Ovary (tissue), 10 donors: ENCODE measurements at regions of chr11 and their contacts with region 1.

Region 1: DNA sequence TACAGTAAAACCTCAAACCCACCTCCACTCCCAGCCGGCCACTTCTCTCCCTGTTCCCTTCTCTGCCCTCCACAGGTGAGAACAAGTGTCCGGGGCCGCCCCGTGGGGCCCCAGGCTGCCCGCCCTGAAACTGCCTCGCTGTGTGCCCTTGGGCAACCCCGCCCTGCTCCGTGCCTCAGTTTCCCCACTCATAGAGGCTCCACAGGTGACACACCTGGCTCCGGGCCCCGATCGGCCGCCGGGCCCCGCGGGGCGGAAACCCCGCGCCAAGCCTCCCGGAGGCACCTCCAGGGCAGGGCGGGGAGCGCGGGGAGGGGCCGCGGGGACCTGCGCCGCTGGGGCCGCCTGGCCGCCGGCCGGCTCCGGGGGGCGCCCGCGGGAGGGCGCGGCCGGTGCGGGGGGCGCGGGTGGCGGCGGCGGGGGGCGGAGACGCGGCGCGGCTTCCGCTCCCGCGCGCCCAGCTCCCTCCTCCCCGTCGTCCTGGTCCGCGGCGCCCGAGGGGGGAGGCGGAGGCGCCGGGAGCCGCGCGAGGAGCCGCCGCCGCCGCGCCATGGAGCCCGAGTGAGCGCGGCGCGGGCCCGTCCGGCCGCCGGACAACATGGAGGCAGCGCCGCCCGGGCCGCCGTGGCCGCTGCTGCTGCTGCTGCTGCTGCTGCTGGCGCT is at the start of gene LRP5:
- DNase-seq: peak; percentile 43 to 71 (median 63)
- H3K4me3 ChIP-seq: peak within 1 kb of the TSS; percentile 64
- H3K27ac ChIP-seq: peak within 1 kb of the TSS; percentile 70 to 74
- H3K4me1 ChIP-seq: peaks cover 19% of the 10 kb centered on the region
- H3K27me3 ChIP-seq: no peaks in the 10 kb centered on the region
- CTCF ChIP-seq: no peak
- EP300 ChIP-seq: no peak
- POLR2A ChIP-seq: no peak
- total RNA-seq, gene LRP5: 21.8 to 63.8 (median 52.9) TPM

Region 2: DNA sequence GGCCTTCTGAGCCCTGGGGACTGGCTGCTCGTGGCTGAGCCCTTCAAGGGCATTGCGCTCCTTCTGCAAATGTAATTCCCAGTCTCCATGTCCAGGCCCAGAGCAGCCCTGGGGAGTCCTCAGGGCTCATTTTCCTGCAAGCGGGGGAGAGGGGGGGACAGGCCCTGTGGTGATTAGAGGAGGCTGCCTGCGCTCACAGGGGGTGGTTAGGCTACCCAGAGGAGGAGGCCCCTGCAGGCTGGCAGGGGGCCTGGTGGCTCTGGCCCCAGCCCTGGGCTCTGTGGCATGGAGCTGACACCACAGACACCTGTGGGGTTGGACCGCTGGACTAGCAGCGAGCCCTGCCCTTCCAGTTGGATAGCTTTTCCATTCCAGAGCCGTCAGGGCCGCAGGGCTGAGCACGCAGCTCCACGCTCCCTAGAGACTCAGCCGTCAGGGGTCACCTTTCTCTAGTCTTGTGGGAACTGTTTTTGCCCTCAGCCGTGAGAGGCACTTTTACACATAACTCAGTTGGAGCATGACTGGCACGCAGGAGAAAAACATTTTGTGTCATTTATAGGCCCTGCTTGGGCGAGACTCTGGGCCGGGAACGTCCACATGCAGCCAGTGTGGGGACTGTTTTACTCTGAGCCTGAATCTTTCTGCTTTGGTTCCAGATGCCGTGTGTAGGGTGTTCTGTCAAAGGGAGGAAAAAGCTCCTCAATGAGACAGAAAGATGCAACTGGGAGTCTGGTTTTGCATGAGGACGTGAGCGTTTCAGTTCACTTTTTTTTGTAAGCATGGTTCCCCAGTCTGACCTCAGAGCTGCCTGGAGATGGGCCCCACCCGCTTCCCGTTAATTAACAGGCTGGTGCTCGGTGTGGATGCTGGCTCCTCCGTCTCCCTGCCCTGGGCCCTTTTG is 58.2 kb after region 1 on chr11:
- intact Hi-C with region 1: loop called in 1 of 4 experiments (anchors 10 kb)
- DNase-seq: peak in 1 of 5 donors; percentile 17
- H3K4me3 ChIP-seq: no peak overlapping the region
- H3K27ac ChIP-seq: no peak overlapping the region
- H3K4me1 ChIP-seq: peaks cover 18% of the 10 kb centered on the region
- H3K27me3 ChIP-seq: no peaks in the 10 kb centered on the region
- CTCF ChIP-seq: no peak
- EP300 ChIP-seq: no peak
- POLR2A ChIP-seq: no peak

Region 3: DNA sequence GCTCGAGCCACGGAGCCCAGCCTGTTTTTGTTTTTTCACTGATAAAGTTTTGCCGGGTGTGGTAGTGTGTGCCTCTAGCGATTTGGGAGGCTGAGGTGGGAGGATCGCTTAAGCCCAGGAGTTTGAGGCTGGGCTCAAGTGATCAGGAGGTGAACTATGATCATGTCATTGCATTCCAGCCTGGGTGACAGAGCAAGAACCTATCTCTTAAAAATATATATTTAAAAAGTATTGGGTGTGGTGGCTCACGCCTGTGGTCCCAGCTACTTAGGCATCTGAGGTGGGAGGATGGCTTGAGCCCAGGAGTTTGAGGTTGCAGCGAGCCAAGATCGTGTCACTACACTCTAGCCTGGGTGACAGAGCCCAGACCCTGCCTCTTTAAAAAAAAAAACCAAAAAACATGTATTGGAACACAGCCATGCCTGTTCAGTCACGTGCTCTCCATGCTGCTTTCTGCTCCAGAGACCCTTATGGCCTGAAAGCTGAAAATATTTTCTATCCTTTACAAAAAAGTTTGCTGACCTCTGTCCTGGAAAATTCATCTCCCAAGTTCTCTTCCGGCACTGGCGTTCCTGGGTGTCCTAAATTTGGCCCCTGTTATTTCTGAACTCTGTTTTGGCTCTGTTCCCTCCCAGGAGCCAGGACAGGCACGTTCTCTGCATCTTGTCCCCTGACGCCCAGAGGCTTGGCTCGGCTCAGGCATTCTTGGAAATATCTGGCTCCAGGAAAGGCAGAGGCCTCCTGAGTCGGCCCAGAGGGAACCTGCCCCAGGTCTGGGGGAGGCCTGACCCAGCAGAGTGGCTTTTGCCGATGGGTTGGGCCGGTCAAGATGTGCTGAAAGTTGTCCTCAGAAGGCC is 87.0 kb after region 1 on chr11:
- intact Hi-C with region 1: no loop called
- DNase-seq: peak; percentile 60 to 84 (median 70)
- H3K4me3 ChIP-seq: no peak overlapping the region
- H3K27ac ChIP-seq: peak overlapping the region; percentile 13 to 75
- H3K4me1 ChIP-seq: peaks cover 21% of the 10 kb centered on the region
- H3K27me3 ChIP-seq: no peaks in the 10 kb centered on the region
- CTCF ChIP-seq: no peak
- EP300 ChIP-seq: no peak
- POLR2A ChIP-seq: no peak